Psoas muscle (tissue), 8 donors: ENCODE measurements at regions of chr4 and their contacts with region 1.

Region 1: DNA sequence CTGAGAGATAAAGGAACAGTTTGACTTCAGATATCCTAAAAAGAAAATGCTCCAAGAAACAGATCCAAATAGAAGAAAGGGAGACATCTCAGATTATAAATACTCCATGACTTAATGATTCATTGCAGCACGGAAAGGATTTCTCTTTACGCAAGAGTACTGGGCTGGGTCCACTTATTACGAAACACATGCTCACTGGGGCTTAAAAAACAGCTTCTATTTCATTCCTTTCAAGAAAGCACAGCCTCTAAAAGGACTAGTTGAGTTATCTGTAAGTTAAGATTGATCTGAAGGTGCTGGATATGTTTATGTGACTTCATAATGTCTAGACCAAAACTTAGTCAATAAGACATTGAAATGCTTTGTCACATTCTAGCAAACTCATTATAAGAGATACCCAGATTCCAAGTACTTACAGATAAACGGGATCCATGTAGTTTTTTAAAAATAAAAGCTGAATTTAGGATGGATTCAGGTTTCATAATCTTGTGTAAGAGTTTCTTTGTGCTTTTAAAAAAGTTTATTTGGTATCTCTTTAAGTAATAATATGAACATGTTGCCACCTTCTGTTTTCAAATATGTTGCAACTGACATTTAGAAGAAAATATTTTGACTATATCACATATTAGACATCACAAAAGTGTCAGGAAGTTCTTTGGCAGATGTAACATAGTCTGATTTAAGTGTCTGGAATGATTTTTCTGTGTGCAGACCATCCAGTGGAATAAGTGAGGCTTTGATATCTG is 109.5 kb upstream of the MYOZ2 start:
- DNase-seq: peak in 1 of 2 donors; percentile 34
- ATAC-seq: peak; percentile 47 to 63 (median 54)
- H3K4me3 ChIP-seq: peak overlapping the region; percentile 77
- H3K27ac ChIP-seq: peak overlapping the region; percentile 98
- H3K4me1 ChIP-seq: peaks cover 27% of the 10 kb centered on the region
- H3K27me3 ChIP-seq: no peaks in the 10 kb centered on the region
- CTCF ChIP-seq: no peak

Region 2: GRCh38 chr4:118835571-118836300 is 190.4 kb before region 1 on chr4 and contains the start of gene SEC24D:
- intact Hi-C with region 1: no loop called
- DNase-seq: peak; percentile 92 to 95
- ATAC-seq: peak; percentile 96 to 98 (median 98)
- H3K4me3 ChIP-seq: peak within 1 kb of the TSS; percentile 100
- H3K27ac ChIP-seq: peak within 1 kb of the TSS; percentile 93
- H3K4me1 ChIP-seq: peaks cover 9% of the 10 kb centered on the region
- H3K27me3 ChIP-seq: no peaks in the 10 kb centered on the region
- CTCF ChIP-seq: no peak
- total RNA-seq, gene SEC24D: 5.8 to 13.7 (median 6.3) TPM

Region 3: DNA sequence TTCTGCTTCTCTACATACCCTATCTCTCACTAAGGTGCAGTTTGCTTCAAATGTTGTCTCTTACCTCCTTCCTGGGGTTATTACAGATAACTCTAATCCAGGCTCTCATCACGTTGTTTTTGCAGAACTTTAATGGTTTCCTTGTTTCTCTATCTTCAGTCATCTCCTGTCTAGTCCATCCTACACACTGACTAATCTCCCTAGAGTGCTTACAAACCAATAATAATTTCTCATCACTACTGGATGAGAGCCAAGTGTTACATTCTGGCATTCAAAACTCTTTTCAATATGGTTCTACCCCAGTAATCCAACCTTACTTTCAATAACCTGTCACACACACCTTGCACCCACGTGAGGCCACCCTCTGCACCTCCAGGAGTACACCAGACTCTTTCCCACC is 51.3 kb before region 1 on chr4:
- intact Hi-C with region 1: no loop called
- DNase-seq: no peak
- ATAC-seq: peak in 3 of 4 donors; percentile 4 to 20 (median 19)
- H3K4me3 ChIP-seq: peak overlapping the region; percentile 59
- H3K27ac ChIP-seq: peak overlapping the region; percentile 95
- H3K4me1 ChIP-seq: peaks cover 36% of the 10 kb centered on the region
- H3K27me3 ChIP-seq: no peaks in the 10 kb centered on the region
- CTCF ChIP-seq: no peak

Region 4: GRCh38 chr4:118989098-118990080 is 36.7 kb before region 1 on chr4:
- intact Hi-C with region 1: loop called (anchors 1 to 5 kb)
- DNase-seq: no peak
- ATAC-seq: peak; percentile 67 to 77 (median 70)
- H3K4me3 ChIP-seq: peak overlapping the region; percentile 29
- H3K27ac ChIP-seq: peak overlapping the region; percentile 95
- H3K4me1 ChIP-seq: peaks cover 82% of the 10 kb centered on the region
- H3K27me3 ChIP-seq: no peaks in the 10 kb centered on the region
- CTCF ChIP-seq: no peak

Region 5: GRCh38 chr4:119010909-119011606 is 15.0 kb before region 1 on chr4:
- intact Hi-C with region 1: loop called in 1 of 2 experiments (anchors 2 kb)
- DNase-seq: peak; percentile 69 to 87
- ATAC-seq: peak; percentile 90 to 96 (median 94)
- H3K4me3 ChIP-seq: peak overlapping the region; percentile 35
- H3K27ac ChIP-seq: peak overlapping the region; percentile 94
- H3K4me1 ChIP-seq: peaks cover 52% of the 10 kb centered on the region
- H3K27me3 ChIP-seq: no peaks in the 10 kb centered on the region
- CTCF ChIP-seq: no peak

Region 6: GRCh38 chr4:119189638-119190037 is 163.5 kb after region 1 on chr4:
- intact Hi-C with region 1: no loop called
- DNase-seq: no peak
- ATAC-seq: peak in 3 of 4 donors; percentile 69 to 93 (median 82)
- H3K4me3 ChIP-seq: no peak overlapping the region
- H3K27ac ChIP-seq: no peak overlapping the region
- H3K4me1 ChIP-seq: no peaks in the 10 kb centered on the region
- H3K27me3 ChIP-seq: no peaks in the 10 kb centered on the region
- CTCF ChIP-seq: no peak